MCF 10A (cell line): ENCODE measurements at regions of chr13 and their contacts with region 1.

Region 1: DNA sequence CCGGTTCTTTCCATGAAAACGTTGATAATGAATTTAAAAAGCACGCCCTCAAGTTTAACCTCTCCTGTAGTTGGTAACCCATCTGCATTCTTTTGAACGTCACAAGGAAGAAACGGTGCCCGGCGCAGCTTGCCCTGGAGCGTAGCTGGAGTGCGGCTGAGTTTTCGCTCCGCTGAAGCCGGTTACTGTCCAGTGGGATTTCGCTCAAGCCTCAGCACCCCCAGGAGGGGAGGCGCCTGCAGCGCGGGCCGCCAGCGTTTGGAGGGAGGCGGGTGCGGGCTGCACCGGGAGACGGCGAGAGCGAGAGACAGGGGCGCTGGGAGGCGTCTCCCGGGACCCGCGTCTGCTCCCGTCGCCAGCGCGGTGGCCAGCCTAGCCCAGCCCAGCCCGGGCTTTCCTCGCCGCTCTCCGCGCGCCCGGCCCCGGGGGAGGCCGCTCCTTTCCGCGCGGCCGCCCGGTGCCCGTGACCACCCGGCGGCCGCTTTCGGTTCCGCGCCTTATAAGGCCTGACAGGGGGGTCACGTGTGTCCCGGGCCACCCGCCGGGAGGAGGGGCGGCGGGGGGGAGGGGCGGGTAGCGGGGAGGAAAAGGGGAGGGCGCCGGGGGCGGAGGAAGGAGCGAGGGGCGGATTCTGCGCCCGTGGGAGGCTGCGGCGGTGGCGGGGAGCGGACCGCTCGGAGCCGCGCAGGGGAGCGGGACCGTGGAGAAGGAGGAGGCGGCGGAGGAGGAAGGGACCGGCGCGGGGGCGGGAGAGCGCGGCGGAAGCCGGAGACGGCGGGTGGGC is 8.3 kb upstream of the DGKH start:
- DNase-seq: peak; percentile 82
- H3K4me3 Mint-ChIP-seq: peak overlapping the region; percentile 84
- H3K27ac Mint-ChIP-seq: peak overlapping the region; percentile 84
- H3K4me1 Mint-ChIP-seq: peaks cover 6% of the 10 kb centered on the region
- H3K27me3 Mint-ChIP-seq: no peaks in the 10 kb centered on the region
- CTCF ChIP-seq: no peak

Region 2: GRCh38 chr13:41905600-41906254 is 134.4 kb before region 1 on chr13:
- CTCF ChIA-PET with region 1: interaction called, 9 read pairs
- POLR2A ChIA-PET with region 1: interaction called, 3 read pairs
- intact Hi-C with region 1: loop called (anchors 1 kb)
- DNase-seq: peak; percentile 65
- H3K4me3 Mint-ChIP-seq: no peak overlapping the region
- H3K27ac Mint-ChIP-seq: peak overlapping the region; percentile 7
- H3K4me1 Mint-ChIP-seq: peaks cover 10% of the 10 kb centered on the region
- H3K27me3 Mint-ChIP-seq: no peaks in the 10 kb centered on the region
- CTCF ChIP-seq: peak; percentile 66

Region 3: DNA sequence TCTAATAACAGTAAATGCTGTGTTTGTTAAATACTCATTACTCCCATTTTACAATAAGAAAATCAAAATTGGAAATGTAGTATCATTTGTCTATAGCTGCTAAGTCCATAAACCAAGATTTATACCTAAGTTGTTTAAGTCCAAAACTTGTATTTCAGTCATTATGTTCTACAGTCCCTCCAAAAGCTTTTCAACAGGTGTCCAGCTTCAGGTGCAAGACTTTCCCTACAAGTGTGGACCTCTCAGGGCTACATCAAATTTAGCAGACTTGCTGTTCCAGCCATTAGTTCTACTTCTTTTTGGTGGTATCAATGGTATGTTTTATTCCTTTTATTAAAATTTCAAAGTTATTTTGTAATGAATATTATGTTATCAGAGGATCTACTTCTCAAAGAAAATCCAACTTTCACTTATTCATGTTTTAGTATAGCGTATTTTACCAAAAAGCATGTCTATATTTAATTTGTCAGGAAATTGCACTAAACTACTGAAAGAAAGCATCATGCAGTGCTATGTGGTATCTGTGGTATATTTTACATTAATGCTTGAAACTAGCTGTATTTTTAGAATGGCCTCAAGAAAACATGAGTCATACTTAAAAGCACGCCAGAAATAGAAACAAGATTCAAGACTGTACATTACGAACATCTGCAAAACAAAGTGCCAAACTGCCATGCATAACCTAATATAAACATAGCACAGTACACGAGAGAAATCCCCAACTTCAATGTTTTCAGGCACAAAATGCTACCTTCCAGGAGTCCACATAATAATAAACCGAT is 123.8 kb before region 1 on chr13:
- CTCF ChIA-PET with region 1: interaction called, 3 read pairs
- POLR2A ChIA-PET with region 1: interaction called, 23 read pairs
- intact Hi-C with region 1: no loop called
- DNase-seq: peak; percentile 75
- H3K4me3 Mint-ChIP-seq: peak overlapping the region; percentile 41
- H3K27ac Mint-ChIP-seq: peak overlapping the region; percentile 90
- H3K4me1 Mint-ChIP-seq: peaks cover 17% of the 10 kb centered on the region
- H3K27me3 Mint-ChIP-seq: no peaks in the 10 kb centered on the region
- CTCF ChIP-seq: no peak

Region 4: GRCh38 chr13:42028113-42028799 is 11.9 kb before region 1 on chr13:
- CTCF ChIA-PET with region 1: interaction called, 6 read pairs
- POLR2A ChIA-PET with region 1: interaction called, 77 read pairs
- intact Hi-C with region 1: loop called (anchors 2 kb)
- DNase-seq: no peak
- H3K4me3 Mint-ChIP-seq: no peak overlapping the region
- H3K27ac Mint-ChIP-seq: no peak overlapping the region
- H3K4me1 Mint-ChIP-seq: peaks cover 29% of the 10 kb centered on the region
- H3K27me3 Mint-ChIP-seq: no peaks in the 10 kb centered on the region
- CTCF ChIP-seq: no peak

Region 5: GRCh38 chr13:42215578-42216421 is 175.7 kb after region 1 on chr13:
- CTCF ChIA-PET with region 1: no interaction called
- POLR2A ChIA-PET with region 1: no interaction called
- intact Hi-C with region 1: loop called (anchors 10 kb)
- DNase-seq: peak; percentile 49
- H3K4me3 Mint-ChIP-seq: no peak overlapping the region
- H3K27ac Mint-ChIP-seq: no peak overlapping the region
- H3K4me1 Mint-ChIP-seq: peaks cover 24% of the 10 kb centered on the region
- H3K27me3 Mint-ChIP-seq: no peaks in the 10 kb centered on the region
- CTCF ChIP-seq: peak; percentile 47